ENCODE measurements at regions of chr15 and their contacts with region 1.

Region 1: DNA sequence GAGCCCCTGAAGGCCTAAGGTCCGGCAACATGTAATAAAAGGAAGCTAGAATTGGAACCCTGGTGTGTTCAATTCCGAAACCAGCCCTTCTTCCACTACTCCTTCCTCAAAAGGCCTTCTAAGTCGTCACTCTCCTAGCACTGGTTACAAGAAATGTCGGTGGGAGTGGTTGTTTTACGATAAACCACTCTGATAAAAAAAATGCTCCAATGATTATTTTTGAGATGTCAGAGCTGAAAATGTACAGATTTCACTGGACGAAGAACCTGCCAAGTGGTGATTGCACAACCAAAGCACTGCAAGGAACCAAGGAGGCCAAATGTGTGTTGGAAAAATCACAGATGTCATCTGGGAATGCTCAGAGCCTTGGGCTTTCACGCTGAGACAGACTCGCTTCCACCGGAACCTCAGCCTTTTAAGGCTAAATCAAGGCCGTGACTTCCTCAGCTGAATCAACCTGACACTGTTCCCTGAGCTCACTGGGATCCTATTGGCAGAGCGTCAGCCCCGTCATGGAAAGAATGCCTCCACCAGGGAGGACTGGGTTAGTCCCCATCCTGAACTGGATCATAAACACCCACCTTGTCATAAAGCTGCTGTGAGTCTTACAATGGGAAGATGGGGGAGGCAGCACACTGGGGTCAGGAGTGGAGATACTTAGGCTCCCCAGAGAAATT is 108.1 kb upstream of the THBS1 start:
- H3K4me3 Mint-ChIP-seq: no peak overlapping the region
- H3K27ac Mint-ChIP-seq: peak overlapping the region; percentile 75
- H3K4me1 Mint-ChIP-seq: peaks cover 55% of the 10 kb centered on the region
- H3K27me3 Mint-ChIP-seq: peaks cover 2% of the 10 kb centered on the region

Region 2: GRCh38 chr15:39358441-39359041 is 114.2 kb before region 1 on chr15:
- intact Hi-C with region 1: no loop called
- H3K4me3 Mint-ChIP-seq: no peak overlapping the region
- H3K27ac Mint-ChIP-seq: no peak overlapping the region
- H3K4me1 Mint-ChIP-seq: peaks cover 17% of the 10 kb centered on the region
- H3K27me3 Mint-ChIP-seq: no peaks in the 10 kb centered on the region

Region 3: DNA sequence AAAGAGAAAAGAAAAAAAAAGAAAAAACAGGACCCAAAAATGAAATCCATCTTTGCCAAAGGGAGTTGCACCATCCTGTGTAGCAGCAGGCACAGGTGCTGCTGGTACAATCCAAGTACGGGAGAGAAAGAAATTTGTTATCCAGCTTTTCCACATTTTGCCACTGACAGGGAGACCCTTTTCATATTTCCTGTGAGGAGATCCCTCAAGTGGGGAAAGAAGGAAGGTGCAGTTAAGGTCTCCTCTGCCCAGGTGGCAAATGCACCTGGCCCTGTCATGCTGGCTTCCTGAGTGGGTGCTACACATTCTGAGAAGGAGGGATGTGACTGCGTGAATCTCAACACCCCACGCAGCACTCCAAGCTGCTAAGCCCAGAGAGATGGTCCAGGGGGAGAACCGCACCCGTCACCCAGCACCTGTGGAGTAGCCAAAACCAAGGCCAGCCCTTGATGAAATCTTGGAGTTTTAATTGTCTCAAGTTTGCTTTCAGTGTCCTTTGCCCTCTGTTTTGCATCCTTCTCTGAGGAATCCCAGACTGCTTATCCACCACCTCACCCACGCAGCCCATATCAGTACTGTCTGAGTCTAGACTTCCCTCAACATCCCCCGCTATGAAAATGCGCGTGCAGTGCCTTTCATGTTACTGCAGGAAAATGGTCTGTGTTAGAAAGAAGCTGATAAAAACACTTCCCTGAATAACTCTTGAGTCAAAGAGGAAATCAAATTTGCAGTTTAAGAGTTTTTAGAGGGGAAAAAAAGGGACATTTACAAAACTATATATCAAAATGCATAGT is 33.8 kb before region 1 on chr15:
- intact Hi-C with region 1: loop called (anchors 5 kb)
- H3K4me3 Mint-ChIP-seq: no peak overlapping the region
- H3K27ac Mint-ChIP-seq: peak overlapping the region; percentile 53
- H3K4me1 Mint-ChIP-seq: peaks cover 29% of the 10 kb centered on the region
- H3K27me3 Mint-ChIP-seq: no peaks in the 10 kb centered on the region

Measured in dendritic cell treated with granulocyte-macrophage colony-stimulating factor and Interleukin-4, amounts not matched to agents 40 ng/mL and 50 ng/mL, for 4 days (primary cell).